ENCODE measurements at regions of chr10 and their contacts with region 1.

Region 1: GRCh38 chr10:30127120-30127541 is 67.7 kb upstream of the JCAD start:
- DNase-seq: no peak
- H3K4me3 ChIP-seq: no peak overlapping the region
- H3K4me3 Mint-ChIP-seq: no peak overlapping the region
- H3K27ac Mint-ChIP-seq: no peak overlapping the region
- H3K4me1 ChIP-seq: no peaks in the 10 kb centered on the region
- H3K4me1 Mint-ChIP-seq: no peaks in the 10 kb centered on the region
- H3K27me3 ChIP-seq: no peaks in the 10 kb centered on the region
- H3K27me3 Mint-ChIP-seq: no peaks in the 10 kb centered on the region
- CTCF ChIP-seq: no peak

Region 2: GRCh38 chr10:29804025-29804852 is 322.9 kb before region 1 on chr10:
- CTCF ChIA-PET with region 1: no interaction called
- POLR2A ChIA-PET with region 1: no interaction called
- intact Hi-C with region 1: no loop called
- DNase-seq: no peak
- H3K4me3 ChIP-seq: no peak overlapping the region
- H3K4me3 Mint-ChIP-seq: no peak overlapping the region
- H3K27ac Mint-ChIP-seq: no peak overlapping the region
- H3K4me1 ChIP-seq: 0 out of 2 replicates have a peak, but pooled peaks cover 12% of the 10 kb centered on the region
- H3K4me1 Mint-ChIP-seq: peaks cover 14% of the 10 kb centered on the region
- H3K27me3 ChIP-seq: no peaks in the 10 kb centered on the region
- H3K27me3 Mint-ChIP-seq: no peaks in the 10 kb centered on the region
- CTCF ChIP-seq: no peak

Region 3: GRCh38 chr10:30284865-30285594 is 157.9 kb after region 1 on chr10:
- CTCF ChIA-PET with region 1: no interaction called
- POLR2A ChIA-PET with region 1: interaction called, 13 read pairs
- intact Hi-C with region 1: no loop called
- DNase-seq: no peak
- H3K4me3 ChIP-seq: no peak overlapping the region
- H3K4me3 Mint-ChIP-seq: no peak overlapping the region
- H3K27ac Mint-ChIP-seq: no peak overlapping the region
- H3K4me1 ChIP-seq: peaks cover 10% of the 10 kb centered on the region
- H3K4me1 Mint-ChIP-seq: no peaks in the 10 kb centered on the region
- H3K27me3 ChIP-seq: no peaks in the 10 kb centered on the region
- H3K27me3 Mint-ChIP-seq: no peaks in the 10 kb centered on the region
- CTCF ChIP-seq: no peak